Activated CD8-positive, alpha-beta T cell treated with anti-CD3 and anti-CD28 coated beads, Interleukin-2, amount 10 ng/mL, durations not matched to agents 7 days and 5 days (primary cell): ENCODE measurements at regions of chr2 and their contacts with region 1.

Region 1: DNA sequence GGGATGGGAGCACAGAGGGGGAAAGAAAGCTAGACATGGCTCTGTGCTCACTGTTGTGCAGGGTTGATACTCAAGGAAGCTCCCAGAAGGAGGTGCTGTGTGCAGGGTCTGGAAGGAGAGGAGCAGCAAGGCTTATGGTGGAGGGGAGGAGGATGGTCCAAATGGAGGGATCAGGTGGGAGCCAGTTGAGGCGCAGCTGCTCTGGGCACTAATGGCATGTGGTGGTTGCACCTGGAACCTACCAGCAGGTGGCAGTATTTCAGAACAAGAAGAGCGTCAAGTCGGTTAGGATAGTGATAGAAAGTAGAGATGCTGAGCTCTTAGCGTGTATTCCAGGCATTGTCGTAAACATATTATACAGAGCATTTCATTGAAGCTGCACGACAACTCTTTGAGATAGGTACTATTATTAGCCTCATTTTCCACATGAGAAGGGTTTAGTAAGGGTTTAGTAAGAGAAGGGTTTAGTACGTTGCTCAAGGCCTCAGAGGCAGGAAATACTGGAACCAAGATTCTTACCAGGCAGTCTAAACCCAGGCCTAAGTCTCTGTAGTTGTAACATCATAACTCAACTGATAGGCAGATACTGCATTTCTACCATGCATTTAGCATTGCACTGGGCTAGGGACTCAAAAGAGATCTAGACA is 223.7 kb downstream of the CYP26B1 start:
- DNase-seq: peak; percentile 70
- ATAC-seq: peak; percentile 74
- H3K4me3 Mint-ChIP-seq: no peak overlapping the region
- H3K27ac Mint-ChIP-seq: no peak overlapping the region
- H3K4me1 Mint-ChIP-seq: no peaks in the 10 kb centered on the region
- H3K27me3 Mint-ChIP-seq: no peaks in the 10 kb centered on the region

Region 2: GRCh38 chr2:71910277-71910676 is 13.7 kb before region 1 on chr2:
- CTCF ChIA-PET with region 1: interaction called, 12 read pairs
- POLR2A ChIA-PET with region 1: no interaction called
- DNase-seq: no peak
- ATAC-seq: no peak
- H3K4me3 Mint-ChIP-seq: no peak overlapping the region
- H3K27ac Mint-ChIP-seq: no peak overlapping the region
- H3K4me1 Mint-ChIP-seq: no peaks in the 10 kb centered on the region
- H3K27me3 Mint-ChIP-seq: no peaks in the 10 kb centered on the region

Region 3: GRCh38 chr2:71935262-71935848 is 11.3 kb after region 1 on chr2:
- CTCF ChIA-PET with region 1: interaction called, 18 read pairs
- POLR2A ChIA-PET with region 1: no interaction called
- DNase-seq: peak; percentile 13
- ATAC-seq: no peak
- H3K4me3 Mint-ChIP-seq: no peak overlapping the region
- H3K27ac Mint-ChIP-seq: no peak overlapping the region
- H3K4me1 Mint-ChIP-seq: no peaks in the 10 kb centered on the region
- H3K27me3 Mint-ChIP-seq: no peaks in the 10 kb centered on the region

Region 4: DNA sequence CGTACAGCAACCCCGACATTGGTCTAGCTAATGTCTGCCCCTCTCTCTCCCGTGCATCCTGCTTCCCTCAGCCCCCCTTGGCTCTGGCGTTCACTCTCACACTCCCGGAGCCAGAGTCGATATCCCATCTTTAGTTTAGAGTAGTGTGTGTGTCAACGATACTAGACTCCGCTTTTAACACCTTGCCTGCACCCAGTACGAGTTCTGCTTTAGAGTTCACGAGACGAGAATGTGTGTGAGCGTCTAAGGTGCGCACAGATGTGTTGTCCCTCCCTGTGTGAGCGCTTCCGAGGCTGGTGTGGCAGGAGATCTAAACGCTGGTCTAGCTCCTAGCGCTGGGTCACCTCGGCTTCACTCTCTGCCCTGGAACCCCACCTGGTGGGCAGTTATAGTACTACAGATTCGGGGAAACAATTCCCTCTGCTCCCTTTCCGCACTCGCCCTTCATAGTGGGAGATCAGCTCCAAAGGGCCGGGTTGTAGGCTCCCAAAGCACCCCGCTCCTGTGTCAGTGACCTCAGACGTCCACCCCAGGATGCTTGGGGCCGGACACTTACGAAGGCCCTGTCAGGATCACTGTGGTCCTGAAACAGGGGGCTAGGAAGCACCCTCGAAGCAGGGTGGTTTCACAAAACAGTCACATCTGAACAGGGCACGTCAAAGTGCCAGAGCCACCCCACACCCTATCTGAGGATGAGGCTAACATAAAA is 226.3 kb after region 1 on chr2:
- CTCF ChIA-PET with region 1: interaction called, 35 read pairs
- POLR2A ChIA-PET with region 1: no interaction called
- DNase-seq: peak; percentile 71
- ATAC-seq: peak; percentile 63
- H3K4me3 Mint-ChIP-seq: peak overlapping the region; percentile 29
- H3K27ac Mint-ChIP-seq: no peak overlapping the region
- H3K4me1 Mint-ChIP-seq: peaks cover 35% of the 10 kb centered on the region
- H3K27me3 Mint-ChIP-seq: peaks cover 63% of the 10 kb centered on the region

Region 5: DNA sequence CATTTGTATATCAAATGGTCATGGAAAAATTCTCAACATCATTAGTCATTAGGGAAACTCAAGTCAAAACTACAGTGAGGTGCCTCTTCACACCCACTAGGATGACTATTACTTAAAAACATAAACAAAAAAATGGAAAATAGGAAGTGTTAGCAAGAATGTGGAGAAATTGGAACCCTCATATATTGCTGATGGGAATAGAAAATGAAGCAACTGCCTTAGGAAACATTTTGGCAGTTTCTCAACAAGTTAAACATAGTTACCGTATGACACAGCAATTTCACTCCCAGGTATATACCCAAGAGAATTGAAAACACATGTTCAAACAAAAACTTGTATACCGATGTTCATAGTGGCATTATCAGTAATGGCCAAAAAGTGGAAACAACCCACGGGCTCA is 241.8 kb after region 1 on chr2:
- CTCF ChIA-PET with region 1: no interaction called
- POLR2A ChIA-PET with region 1: no interaction called
- DNase-seq: no peak
- ATAC-seq: no peak
- H3K4me3 Mint-ChIP-seq: no peak overlapping the region
- H3K27ac Mint-ChIP-seq: no peak overlapping the region
- H3K4me1 Mint-ChIP-seq: no peaks in the 10 kb centered on the region
- H3K27me3 Mint-ChIP-seq: peaks cover 26% of the 10 kb centered on the region

Region 6: DNA sequence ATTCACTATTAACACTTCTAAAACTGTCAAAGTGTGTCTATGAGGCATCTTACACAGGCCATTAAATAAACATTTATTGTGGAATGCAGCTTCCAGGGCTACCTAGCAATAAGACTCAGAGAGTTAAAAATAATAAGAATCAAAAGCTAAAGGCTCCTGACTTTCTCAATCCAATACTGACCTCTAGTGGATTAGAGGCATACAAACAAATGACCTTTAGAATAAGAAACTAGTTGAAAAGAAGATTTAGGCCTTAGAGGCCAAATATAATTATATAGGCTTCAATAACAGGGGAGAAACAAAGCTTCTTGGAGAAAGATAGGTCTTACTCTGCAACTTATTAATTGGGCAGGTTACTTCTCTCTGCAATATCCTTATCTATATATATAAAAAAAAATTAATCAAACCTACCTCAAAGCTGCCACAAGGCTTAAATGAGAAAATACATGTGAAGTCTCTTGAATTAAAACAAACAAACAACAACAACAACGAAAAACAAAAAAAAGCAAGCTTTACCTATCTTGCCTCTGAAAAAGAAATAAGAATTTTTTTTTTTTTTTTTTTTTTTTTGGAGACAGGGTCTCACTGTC is 655.7 kb after region 1 on chr2:
- CTCF ChIA-PET with region 1: interaction called, 16 read pairs
- POLR2A ChIA-PET with region 1: no interaction called
- DNase-seq: no peak
- ATAC-seq: no peak
- H3K4me3 Mint-ChIP-seq: no peak overlapping the region
- H3K27ac Mint-ChIP-seq: no peak overlapping the region
- H3K4me1 Mint-ChIP-seq: no peaks in the 10 kb centered on the region
- H3K27me3 Mint-ChIP-seq: no peaks in the 10 kb centered on the region